Astrocyte of the cerebellum (primary cell): ENCODE measurements at regions of chr13 and their contacts with region 1.

Region 1: GRCh38 chr13:91586609-91587008 is 188.2 kb downstream of the GPC5 start:
- DNase-seq: no peak
- H3K4me3 ChIP-seq: no peak overlapping the region
- CTCF ChIP-seq: no peak

Region 2: DNA sequence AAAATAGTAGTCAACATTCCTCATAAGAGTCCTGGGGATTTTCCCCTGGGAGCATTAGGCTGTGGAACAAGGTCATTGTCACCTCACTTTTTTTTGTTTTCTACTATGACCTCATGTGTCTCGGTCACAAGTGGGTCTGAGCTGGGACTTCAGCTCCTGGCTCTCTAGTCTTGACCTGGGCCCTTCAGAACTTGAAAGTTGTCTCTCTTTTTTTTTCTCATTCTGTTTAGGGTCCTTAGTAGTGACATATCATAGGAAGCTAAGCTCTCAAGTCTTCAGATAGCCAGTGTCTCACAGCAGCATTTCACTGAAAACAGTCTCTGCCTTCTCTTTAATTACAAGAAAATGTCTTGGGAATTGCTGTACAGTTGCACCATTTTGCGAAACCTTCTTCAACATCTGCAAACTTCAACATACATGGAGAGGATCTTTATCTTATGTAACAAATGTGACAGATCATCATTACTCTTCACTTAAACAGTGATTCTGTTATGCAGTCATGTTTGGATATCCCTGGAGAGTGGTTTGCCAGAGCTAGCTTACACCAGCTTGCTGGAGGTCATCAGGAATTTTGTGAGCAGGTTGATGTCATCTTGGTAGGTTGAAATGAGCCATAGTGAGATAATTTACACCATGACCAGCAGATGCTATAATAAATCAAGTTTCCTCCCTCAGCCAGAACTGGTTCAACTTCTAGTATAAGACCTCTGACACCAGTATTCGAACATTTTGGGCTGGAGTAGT is 56.7 kb before region 1 on chr13:
- in situ Hi-C with region 1: loop called (anchors 5 kb)
- DNase-seq: no peak
- H3K4me3 ChIP-seq: no peak overlapping the region
- CTCF ChIP-seq: no peak

Region 3: DNA sequence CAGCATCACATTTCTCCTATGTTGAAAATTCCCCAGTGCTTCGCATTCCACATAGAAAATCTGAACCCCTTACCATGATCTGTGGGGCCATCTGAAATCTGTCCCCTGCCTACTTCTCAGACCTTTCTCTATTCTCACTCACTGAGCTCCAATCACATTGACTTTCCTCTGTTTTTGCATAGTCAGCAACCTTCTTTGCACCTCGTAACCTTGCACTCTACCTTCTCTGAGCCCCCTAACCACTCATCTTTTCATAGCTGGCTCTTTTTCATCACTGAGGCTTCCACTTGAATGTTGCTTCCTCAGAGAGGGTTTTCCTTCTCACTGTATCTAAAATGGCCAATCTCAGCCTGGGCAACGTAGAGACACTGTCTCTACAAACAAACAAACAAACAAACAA is 98.1 kb after region 1 on chr13:
- in situ Hi-C with region 1: no loop called
- DNase-seq: no peak
- H3K4me3 ChIP-seq: no peak overlapping the region
- CTCF ChIP-seq: no peak